GM12878 (cell line): ENCODE measurements at regions of chr3 and their contacts with region 1.

Region 1: DNA sequence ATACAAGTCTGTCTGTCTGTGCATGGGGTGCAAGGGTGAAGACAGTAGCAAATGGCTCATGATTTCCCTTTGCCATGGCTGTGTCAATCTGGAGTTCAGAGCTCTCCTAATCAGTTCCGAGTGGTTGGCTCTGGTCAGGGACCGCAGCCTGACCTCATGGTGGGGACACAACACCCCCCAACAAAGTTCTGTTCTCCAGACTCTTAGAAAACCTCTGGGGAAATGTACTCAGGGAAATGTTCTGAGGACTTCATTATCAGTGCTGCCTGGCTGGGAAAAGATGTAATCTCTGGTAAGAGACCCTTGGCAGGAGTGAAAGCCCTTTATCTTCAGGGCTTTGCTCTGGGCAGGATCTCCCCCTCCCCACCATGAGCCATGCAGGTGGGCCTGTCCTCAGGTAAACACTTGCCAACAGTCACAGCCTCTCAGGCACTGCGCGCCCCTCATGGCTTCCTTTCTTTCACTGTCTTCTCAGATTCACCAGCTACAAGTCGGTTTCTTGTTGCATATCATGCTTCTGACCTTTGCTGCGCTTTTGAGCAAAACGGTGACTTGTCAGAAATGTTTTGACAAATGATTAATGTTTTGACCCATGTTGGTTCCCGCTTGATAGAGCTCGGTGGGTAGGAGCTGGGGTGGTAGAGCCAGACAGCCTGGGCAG is 95.5 kb downstream of the ST6GAL1 start:
- DNase-seq: peak; percentile 71
- ATAC-seq: peak; percentile 52
- H3K4me3 ChIP-seq: peak overlapping the region; percentile 76
- H3K27ac ChIP-seq: peak overlapping the region; percentile 92
- H3K4me1 ChIP-seq: peaks cover 29% of the 10 kb centered on the region
- H3K27me3 ChIP-seq: no peaks in the 10 kb centered on the region
- CTCF ChIP-seq: no peak
- EP300 ChIP-seq: no peak
- POLR2A ChIP-seq: peak; percentile 60
- RAD21 ChIP-seq: no peak

Region 2: GRCh38 chr3:186570096-186570940 is 455.5 kb before region 1 on chr3 and contains the start of gene DNAJB11:
- CTCF ChIA-PET with region 1: no interaction called
- POLR2A ChIA-PET with region 1: interaction called, 4 read pairs
- RAD21 ChIA-PET with region 1: no interaction called
- SMC1A ChIA-PET with region 1: no interaction called
- in situ Hi-C with region 1: no loop called
- intact Hi-C with region 1: loop called (anchors 5 kb)
- DNase-seq: peak; percentile 98
- ATAC-seq: peak; percentile 90
- H3K4me3 ChIP-seq: peak within 1 kb of the TSS; percentile 90
- H3K27ac ChIP-seq: peak within 1 kb of the TSS; percentile 85
- H3K4me1 ChIP-seq: peaks cover 10% of the 10 kb centered on the region
- H3K27me3 ChIP-seq: no peaks in the 10 kb centered on the region
- CTCF ChIP-seq: no peak
- EP300 ChIP-seq: no peak
- POLR2A ChIP-seq: peak; percentile 92
- RAD21 ChIP-seq: no peak
- polyA plus RNA-seq, gene DNAJB11: 16.2 to 26.4 TPM

Region 3: DNA sequence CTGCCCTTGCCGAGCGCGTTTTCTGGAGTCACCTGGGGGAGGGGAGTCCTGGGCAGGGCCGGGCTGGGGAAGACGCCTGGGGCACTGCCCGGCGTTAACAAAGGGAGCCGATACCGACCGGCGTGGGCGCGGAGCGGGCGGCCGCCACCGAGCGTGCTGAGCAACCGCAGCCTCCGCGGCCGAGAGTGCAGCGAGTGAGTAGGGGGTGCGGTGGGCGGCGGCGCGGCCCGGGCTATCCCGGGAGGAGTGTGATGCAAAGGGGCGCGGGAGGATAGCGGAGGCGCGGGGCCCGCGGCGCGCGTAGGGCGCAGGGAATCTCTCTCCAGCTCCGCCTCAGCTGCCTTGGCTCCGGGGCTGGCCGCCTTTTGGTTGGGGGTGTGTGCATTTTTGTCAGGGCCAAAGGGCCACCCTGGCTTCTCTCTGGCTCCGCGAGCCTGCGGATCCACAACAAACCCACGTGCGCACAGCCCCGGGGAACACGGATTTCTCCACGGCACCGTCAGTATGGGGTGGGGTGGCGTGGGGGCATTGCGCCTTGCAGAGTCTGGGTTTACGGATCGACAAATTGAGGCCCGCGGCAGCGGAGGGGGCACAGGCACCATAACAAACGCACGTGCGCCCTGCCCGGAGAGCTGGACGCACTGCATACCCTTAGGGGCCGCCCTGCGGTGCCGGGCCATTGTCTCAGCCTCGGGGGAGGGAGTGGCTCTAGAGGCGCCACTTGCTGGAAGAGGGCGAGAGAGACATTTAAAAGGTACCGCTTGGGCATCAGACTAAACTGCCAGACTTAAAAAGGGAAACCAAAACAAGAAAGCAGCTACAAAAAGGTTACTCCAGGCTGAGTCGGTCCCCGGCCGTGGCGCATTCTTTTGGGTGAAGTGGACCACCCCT is 94.9 kb before region 1 on chr3:
- CTCF ChIA-PET with region 1: interaction called, 11 read pairs
- POLR2A ChIA-PET with region 1: interaction called, 20 read pairs
- RAD21 ChIA-PET with region 1: interaction called, 47 read pairs
- SMC1A ChIA-PET with region 1: interaction called, 42 read pairs
- in situ Hi-C with region 1: no loop called
- intact Hi-C with region 1: loop called (anchors 2 kb)
- DNase-seq: peak; percentile 52
- ATAC-seq: peak; percentile 92
- H3K4me3 ChIP-seq: peak overlapping the region; percentile 96
- H3K27ac ChIP-seq: peak overlapping the region; percentile 81
- H3K4me1 ChIP-seq: peaks cover 11% of the 10 kb centered on the region
- H3K27me3 ChIP-seq: no peaks in the 10 kb centered on the region
- CTCF ChIP-seq: peak; percentile 26 to 33 (median 31); a peak in 5 of 6 replicates
- EP300 ChIP-seq: no peak
- POLR2A ChIP-seq: peak; percentile 67
- RAD21 ChIP-seq: peak; percentile 47

Region 4: DNA sequence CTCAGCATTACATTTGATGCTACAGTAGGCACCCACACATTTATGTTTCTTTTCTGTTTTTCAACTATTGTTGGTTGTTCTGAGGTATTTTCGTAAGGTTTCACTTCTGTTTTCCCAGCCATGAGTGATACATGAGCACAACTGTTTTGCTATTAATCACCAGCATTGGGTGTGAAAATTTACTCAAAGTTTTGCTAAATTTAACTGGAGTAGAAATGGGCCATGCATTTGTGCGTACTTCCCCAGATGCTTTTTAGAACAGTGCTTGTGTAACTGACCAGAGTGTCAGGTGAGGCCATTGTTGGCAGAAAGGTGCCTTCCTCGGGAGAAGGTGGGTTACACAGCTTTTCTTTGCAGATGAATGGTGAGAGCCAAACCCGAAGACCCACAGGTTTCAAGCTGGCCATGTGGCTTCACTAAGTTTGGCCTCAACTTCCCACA is 25.1 kb before region 1 on chr3:
- CTCF ChIA-PET with region 1: interaction called, 19 read pairs
- POLR2A ChIA-PET with region 1: interaction called, 137 read pairs
- RAD21 ChIA-PET with region 1: interaction called, 183 read pairs
- SMC1A ChIA-PET with region 1: interaction called, 150 read pairs
- in situ Hi-C with region 1: no loop called
- intact Hi-C with region 1: loop called (anchors 1 kb)
- DNase-seq: peak; percentile 99
- ATAC-seq: peak; percentile 79
- H3K4me3 ChIP-seq: peak overlapping the region; percentile 46; the same call in 1 of the 2 replicates
- H3K27ac ChIP-seq: peak overlapping the region; percentile 91
- H3K4me1 ChIP-seq: peaks cover 51% of the 10 kb centered on the region
- H3K27me3 ChIP-seq: no peaks in the 10 kb centered on the region
- CTCF ChIP-seq: no peak
- EP300 ChIP-seq: peak; percentile 99 to 100
- POLR2A ChIP-seq: peak; percentile 66
- RAD21 ChIP-seq: no peak

Region 5: DNA sequence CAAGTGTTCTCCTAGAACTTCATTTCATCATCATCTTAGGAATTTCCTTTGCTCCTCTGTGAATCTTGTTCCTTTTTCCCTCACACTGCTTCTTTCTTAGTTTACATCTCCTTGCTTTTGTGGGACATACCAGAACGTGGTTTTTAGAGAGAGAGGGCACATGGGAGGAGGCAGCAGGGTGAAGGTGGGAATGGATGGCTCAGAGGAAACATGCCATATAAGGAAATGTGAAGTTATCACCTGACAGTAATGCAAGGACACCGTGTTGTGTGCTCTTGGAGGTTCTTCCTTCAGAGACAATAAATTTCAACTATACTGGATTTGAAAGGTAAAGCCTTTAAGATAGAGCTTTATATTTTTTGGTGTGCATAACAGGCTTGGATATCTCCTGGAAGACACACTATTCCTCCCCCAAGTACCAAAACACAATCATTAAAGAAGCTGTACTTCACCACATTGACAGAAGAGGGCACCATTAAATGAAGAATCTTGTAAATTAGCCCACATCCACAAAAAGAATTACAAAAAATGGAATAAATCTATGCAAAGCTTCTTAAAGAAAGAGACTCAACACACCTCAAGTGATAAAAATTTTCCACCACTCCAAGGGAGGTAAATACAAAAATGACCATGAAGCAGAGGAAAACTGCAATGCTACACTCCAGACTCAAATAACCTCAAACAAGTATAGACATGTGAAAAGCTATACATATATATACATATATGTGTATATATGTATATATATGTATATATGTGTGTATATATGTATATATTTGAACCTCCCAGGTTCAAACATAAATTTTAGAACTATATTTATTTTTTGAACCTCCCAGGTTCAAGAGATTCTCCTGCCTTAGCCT is 87.4 kb after region 1 on chr3:
- CTCF ChIA-PET with region 1: interaction called, 13 read pairs
- POLR2A ChIA-PET with region 1: no interaction called
- RAD21 ChIA-PET with region 1: interaction called, 10 read pairs
- SMC1A ChIA-PET with region 1: interaction called, 9 read pairs
- in situ Hi-C with region 1: no loop called
- intact Hi-C with region 1: no loop called
- DNase-seq: no peak
- ATAC-seq: peak; percentile 71
- H3K4me3 ChIP-seq: no peak overlapping the region
- H3K27ac ChIP-seq: no peak overlapping the region
- H3K4me1 ChIP-seq: peaks cover 4% of the 10 kb centered on the region; the same call in 1 of the 2 replicates
- H3K27me3 ChIP-seq: no peaks in the 10 kb centered on the region
- CTCF ChIP-seq: peak; percentile 49 to 59 (median 49); a peak in 5 of 6 replicates
- EP300 ChIP-seq: 0 out of 4 replicates have a peak, but pooled peaks of 1 of the 2 experiments have one; percentile 16
- POLR2A ChIP-seq: no peak
- RAD21 ChIP-seq: peak; percentile 78

Region 6: DNA sequence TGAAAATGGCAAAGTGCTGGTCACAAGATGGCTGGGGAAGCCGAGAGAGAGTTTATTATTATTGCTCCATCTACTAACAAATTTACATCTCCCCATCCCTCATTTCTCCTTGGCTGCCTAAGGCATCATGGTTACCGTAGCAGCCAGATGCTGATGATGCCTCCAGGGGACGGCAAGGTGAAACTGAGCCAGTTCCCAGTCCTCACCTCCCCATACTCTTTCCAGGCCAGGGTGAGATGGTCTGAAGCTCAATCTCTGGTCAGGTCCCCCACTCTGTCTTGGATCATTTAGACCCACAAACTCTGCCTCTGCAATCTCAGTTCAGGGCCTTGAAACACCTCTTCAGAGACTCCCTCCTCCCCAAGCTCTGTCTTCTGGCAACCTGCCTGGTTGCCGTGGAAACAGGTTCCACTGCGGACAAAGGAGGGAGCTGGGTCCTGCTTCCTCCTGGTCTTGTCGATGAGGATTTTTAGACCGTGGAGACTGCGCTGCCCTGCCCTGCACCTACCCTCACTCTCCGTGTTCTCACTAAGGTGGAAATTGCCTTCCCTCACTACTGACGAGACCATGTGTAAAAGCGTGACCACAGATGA is 171.4 kb after region 1 on chr3 and contains the start of gene RTP1:
- CTCF ChIA-PET with region 1: no interaction called
- POLR2A ChIA-PET with region 1: no interaction called
- RAD21 ChIA-PET with region 1: no interaction called
- SMC1A ChIA-PET with region 1: no interaction called
- in situ Hi-C with region 1: no loop called
- intact Hi-C with region 1: no loop called
- DNase-seq: no peak
- ATAC-seq: no peak
- H3K4me3 ChIP-seq: no peak within 1 kb of the TSS
- H3K27ac ChIP-seq: no peak within 1 kb of the TSS
- H3K4me1 ChIP-seq: no peaks in the 10 kb centered on the region
- H3K27me3 ChIP-seq: no peaks in the 10 kb centered on the region; a peak in 1 of 4 replicates
- CTCF ChIP-seq: no peak
- EP300 ChIP-seq: no peak
- POLR2A ChIP-seq: no peak
- RAD21 ChIP-seq: no peak
- polyA plus RNA-seq, gene RTP1: not detected